ENCODE measurements at regions of chr6 and their contacts with region 1.

Region 1: DNA sequence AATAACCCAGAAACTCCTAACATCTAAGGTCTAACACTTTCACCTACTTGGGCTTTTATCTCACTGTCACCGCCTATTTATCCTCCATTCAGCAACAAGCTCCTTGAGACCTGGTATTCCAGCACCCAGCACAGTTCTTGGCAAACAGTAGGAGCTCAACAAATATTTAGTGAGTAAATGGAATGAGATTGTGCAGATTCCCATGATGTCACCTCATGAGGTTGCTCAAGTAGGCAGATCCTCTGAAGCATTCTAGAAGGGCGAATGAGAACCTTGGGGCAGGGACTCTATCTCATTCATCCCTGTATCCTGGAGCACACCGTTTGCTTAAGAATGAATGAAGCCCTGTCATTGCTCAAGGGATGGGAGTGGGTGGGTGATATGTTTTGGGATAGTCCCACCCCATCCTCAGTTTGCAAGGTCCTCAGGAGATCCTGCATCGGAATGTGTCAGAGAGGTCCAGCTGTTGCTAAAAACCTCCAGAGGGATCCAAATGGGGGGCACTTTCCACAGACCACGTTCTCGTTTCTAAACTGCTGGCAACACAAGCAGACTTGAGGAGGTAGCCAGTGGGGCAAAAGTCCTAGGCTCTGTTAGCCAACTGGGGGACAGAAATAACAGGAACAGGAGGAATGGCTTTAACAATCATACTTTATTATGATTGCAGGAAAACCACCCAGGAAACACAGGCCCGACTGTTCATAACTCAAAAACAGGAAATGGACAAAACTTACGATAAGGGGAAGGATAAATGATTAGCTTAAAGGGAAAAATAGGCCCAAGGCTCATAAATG is 42.0 kb downstream of the EDN1 start:
- DNase-seq: peak; percentile 47
- H3K4me3 Mint-ChIP-seq: no peak overlapping the region
- H3K27ac Mint-ChIP-seq: no peak overlapping the region
- H3K4me1 Mint-ChIP-seq: peaks cover 35% of the 10 kb centered on the region
- H3K27me3 Mint-ChIP-seq: no peaks in the 10 kb centered on the region
- CTCF ChIP-seq: no peak

Region 2: DNA sequence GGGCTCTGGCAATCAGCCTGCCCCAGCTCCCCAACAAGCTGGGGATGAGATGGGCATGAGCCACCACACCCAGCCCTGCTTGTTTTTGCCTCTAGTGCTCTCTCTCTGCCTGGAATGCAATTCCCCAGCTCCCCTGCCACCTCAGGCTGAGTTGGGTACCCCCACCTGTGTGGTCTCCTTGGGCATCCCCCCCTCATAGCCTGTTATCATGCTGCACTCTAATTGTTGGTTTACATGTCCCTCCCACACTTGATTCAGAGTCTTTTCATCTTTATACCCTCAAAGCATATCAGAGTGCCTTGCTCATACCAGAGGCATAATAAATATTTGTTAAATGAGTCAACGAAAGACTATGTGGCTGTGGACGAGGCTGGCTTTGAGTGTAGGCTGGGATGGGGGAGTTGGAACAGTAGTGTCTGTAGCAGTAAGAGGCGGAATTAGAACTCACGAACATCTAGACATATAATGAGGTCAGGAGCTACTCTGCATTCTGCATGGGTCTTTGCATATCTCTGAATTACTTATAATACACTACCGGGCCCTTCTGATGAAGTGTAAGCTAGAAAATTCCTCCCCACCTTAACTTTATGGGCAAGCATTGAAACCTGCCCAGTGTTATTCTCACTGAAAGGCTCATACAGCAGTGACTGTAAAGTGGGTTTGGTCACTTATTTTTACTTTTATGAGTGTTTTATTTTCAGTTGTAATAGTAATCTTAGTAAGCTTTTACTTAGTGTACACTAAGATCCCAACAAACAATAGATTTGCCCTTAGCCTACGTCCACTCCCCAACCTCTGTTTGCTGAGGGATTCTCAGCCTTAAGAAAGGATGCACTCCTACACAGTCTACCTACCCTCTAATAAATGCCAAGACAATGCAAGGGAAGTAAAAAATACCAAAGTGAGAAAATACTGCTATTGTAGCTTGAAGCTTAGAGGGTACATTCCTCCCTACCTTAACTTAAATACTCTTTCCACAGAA is 16.7 kb after region 1 on chr6:
- CTCF ChIA-PET with region 1: interaction called, 6 read pairs
- POLR2A ChIA-PET with region 1: interaction called, 89 read pairs
- intact Hi-C with region 1: no loop called
- DNase-seq: peak; percentile 82
- H3K4me3 Mint-ChIP-seq: peak overlapping the region; percentile 19
- H3K27ac Mint-ChIP-seq: peak overlapping the region; percentile 95
- H3K4me1 Mint-ChIP-seq: peaks cover 32% of the 10 kb centered on the region
- H3K27me3 Mint-ChIP-seq: no peaks in the 10 kb centered on the region
- CTCF ChIP-seq: no peak

Region 3: GRCh38 chr6:12354499-12354898 is 22.3 kb after region 1 on chr6:
- CTCF ChIA-PET with region 1: interaction called, 6 read pairs
- POLR2A ChIA-PET with region 1: interaction called, 89 read pairs
- intact Hi-C with region 1: no loop called
- DNase-seq: peak; percentile 90
- H3K4me3 Mint-ChIP-seq: peak overlapping the region; percentile 49
- H3K27ac Mint-ChIP-seq: peak overlapping the region; percentile 83
- H3K4me1 Mint-ChIP-seq: peaks cover 39% of the 10 kb centered on the region
- H3K27me3 Mint-ChIP-seq: no peaks in the 10 kb centered on the region
- CTCF ChIP-seq: no peak